ENCODE measurements at regions of chr12 and their contacts with region 1.

Region 1: DNA sequence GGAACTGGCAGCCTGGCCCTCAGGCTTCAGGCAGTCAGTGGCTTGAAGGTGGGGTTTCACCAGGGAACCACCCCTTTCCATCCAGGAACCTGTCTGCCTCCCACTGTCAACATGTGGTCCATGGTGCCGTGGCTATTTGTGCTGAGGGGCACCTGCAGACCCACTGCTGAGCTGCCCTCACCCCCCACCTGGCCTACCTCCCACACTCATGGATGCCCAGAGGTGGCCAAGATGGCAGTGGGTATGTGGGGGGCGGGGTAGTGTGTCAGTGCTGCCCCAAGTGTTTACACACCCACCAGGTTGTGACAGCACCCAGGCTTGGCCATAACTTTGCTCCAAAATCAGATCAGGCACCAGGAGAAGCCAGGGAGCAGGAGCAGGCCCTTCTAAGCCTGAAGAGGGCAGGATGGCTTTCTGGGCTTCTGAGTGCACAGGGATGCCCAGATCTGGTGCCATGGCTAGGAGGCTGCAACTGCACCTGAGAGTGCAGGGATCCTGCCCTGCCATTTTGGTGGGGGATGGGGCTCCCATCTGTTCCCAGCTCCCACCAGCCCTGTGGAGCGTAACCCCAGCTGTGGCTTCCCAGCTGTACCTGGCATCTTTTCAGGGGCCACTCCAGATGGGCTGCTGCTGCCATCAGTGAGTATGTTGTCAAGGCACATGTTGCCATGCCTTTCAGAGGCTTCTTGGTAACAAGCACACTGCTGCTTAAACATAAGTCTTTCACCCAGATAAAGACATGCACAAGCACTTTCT is 263.9 kb downstream of the LRIG3 start:
- DNase-seq: no peak
- H3K4me3 ChIP-seq: no peak overlapping the region
- H3K27ac ChIP-seq: no peak overlapping the region
- H3K4me1 ChIP-seq: no peaks in the 10 kb centered on the region
- H3K27me3 ChIP-seq: no peaks in the 10 kb centered on the region
- CTCF ChIP-seq: no peak
- POLR2A ChIP-seq: no peak

Region 2: DNA sequence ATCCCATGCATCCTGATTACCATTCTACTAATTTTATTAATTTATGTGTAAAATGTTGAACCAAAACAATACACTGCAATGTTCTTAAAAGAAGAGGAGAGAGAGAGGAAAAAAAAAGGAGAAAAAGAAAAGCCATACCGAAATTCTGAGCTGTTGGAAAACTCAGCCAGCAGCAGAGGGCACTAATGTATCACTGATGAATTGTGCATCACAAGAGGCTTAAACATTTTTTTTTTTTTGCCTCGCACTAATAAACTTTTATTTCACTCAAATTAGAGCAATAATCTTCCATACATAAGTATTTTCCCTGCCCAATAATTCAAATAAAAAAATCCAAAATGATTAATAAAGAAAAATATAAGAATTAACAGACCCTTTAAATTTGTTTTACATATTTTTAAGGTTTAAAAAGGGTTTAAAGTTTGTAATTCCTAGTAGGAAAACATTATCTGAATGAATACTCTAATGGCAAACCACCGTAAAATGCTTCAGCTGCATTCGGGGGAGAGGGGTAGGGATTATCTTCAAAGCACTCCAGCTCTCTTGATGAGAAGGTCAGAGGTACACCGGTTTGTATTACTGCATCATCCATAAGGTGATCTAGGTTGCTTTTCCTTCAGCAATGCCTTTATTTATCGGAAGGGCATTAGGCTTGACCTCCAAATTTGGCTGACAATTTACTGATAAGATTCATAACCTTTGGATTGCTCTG is 673.1 kb before region 1 on chr12:
- intact Hi-C with region 1: loop called (anchors 10 kb)
- DNase-seq: no peak
- H3K4me3 ChIP-seq: no peak overlapping the region
- H3K27ac ChIP-seq: no peak overlapping the region
- H3K4me1 ChIP-seq: no peaks in the 10 kb centered on the region
- H3K27me3 ChIP-seq: no peaks in the 10 kb centered on the region
- CTCF ChIP-seq: peak; percentile 20 to 55 (median 53)
- POLR2A ChIP-seq: no peak

Region 3: GRCh38 chr12:59344224-59344623 is 687.8 kb after region 1 on chr12:
- intact Hi-C with region 1: no loop called
- DNase-seq: no peak
- H3K4me3 ChIP-seq: no peak overlapping the region
- H3K27ac ChIP-seq: no peak overlapping the region
- H3K4me1 ChIP-seq: no peaks in the 10 kb centered on the region
- H3K27me3 ChIP-seq: no peaks in the 10 kb centered on the region
- CTCF ChIP-seq: no peak
- POLR2A ChIP-seq: no peak